H1 (cell line): ENCODE measurements at regions of chr1 and their contacts with region 1.

Region 1: GRCh38 chr1:9145021-9145668 is 16.2 kb upstream of the GPR157 start:
- DNase-seq: no peak
- H3K4me3 ChIP-seq: no peak overlapping the region
- H3K27ac ChIP-seq: no peak overlapping the region
- H3K4me1 ChIP-seq: no peaks in the 10 kb centered on the region; a peak in 1 of 7 replicates
- H3K27me3 ChIP-seq: no peaks in the 10 kb centered on the region
- CTCF ChIP-seq: no peak
- EP300 ChIP-seq: no peak
- POLR2A ChIP-seq: no peak
- RAD21 ChIP-seq: no peak

Region 2: GRCh38 chr1:9128520-9129265 is 16.5 kb before region 1 on chr1 and contains the start of gene GPR157:
- CTCF ChIA-PET with region 1: interaction called, 29 read pairs
- POLR2A ChIA-PET with region 1: interaction called, 5 read pairs
- DNase-seq: peak; percentile 33 to 89
- H3K4me3 ChIP-seq: peak within 1 kb of the TSS; percentile 42 to 72 (median 60)
- H3K27ac ChIP-seq: no peak within 1 kb of the TSS
- H3K4me1 ChIP-seq: peaks cover 0 to 9% (median 7%) of the 10 kb centered on the region in 4 experiments; a peak in 5 of 7 replicates
- H3K27me3 ChIP-seq: peaks cover 0 to 14% (median 11%) of the 10 kb centered on the region in 4 experiments; a peak in 5 of 7 replicates
- CTCF ChIP-seq: no peak
- EP300 ChIP-seq: no peak
- POLR2A ChIP-seq: peak in 1 of 2 experiments; percentile 41; a peak in 1 of 3 replicates
- RAD21 ChIP-seq: no peak
- total RNA-seq, gene GPR157: 9.8 and 11.0 TPM in 2 replicates

Region 3: GRCh38 chr1:9166289-9167235 is 21.4 kb after region 1 on chr1:
- CTCF ChIA-PET with region 1: interaction called, 13 read pairs
- POLR2A ChIA-PET with region 1: interaction called, 3 read pairs
- DNase-seq: no peak
- H3K4me3 ChIP-seq: 0 out of 8 replicates have a peak overlapping the region, but pooled peaks of 1 of the 4 experiments have one; percentile 5
- H3K27ac ChIP-seq: no peak overlapping the region
- H3K4me1 ChIP-seq: peaks cover 0 to 26% (median 7%) of the 10 kb centered on the region in 4 experiments; a peak in 6 of 7 replicates
- H3K27me3 ChIP-seq: no peaks in the 10 kb centered on the region
- CTCF ChIP-seq: no peak
- EP300 ChIP-seq: no peak
- POLR2A ChIP-seq: no peak
- RAD21 ChIP-seq: no peak

Region 4: DNA sequence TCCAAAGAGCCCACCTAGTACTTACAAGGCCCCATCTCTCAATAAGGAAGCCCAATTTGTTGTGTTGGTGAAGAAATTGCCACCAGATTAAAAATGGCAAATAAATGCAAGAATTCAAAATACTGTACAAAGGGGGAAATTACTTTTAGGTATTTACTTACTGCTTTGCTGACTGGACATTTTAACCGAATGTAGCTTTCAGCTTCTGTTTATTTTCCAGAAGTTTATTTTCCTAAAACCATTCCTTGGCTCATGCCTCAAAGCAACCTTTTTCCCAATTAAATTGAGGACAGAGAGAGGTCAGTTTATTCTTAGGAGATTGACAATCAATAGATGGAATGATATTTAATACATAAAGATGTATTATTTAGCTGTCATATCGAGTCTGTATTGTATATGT is 41.9 kb after region 1 on chr1:
- CTCF ChIA-PET with region 1: interaction called, 16 read pairs
- POLR2A ChIA-PET with region 1: interaction called, 4 read pairs
- DNase-seq: no peak
- H3K4me3 ChIP-seq: no peak overlapping the region
- H3K27ac ChIP-seq: no peak overlapping the region
- H3K4me1 ChIP-seq: peaks cover 0 to 8% (median 6%) of the 10 kb centered on the region in 4 experiments; a peak in 4 of 7 replicates
- H3K27me3 ChIP-seq: peaks cover 0 to 17% (median 9%) of the 10 kb centered on the region in 4 experiments; a peak in 5 of 7 replicates
- CTCF ChIP-seq: no peak
- EP300 ChIP-seq: no peak
- POLR2A ChIP-seq: no peak
- RAD21 ChIP-seq: no peak

Region 5: DNA sequence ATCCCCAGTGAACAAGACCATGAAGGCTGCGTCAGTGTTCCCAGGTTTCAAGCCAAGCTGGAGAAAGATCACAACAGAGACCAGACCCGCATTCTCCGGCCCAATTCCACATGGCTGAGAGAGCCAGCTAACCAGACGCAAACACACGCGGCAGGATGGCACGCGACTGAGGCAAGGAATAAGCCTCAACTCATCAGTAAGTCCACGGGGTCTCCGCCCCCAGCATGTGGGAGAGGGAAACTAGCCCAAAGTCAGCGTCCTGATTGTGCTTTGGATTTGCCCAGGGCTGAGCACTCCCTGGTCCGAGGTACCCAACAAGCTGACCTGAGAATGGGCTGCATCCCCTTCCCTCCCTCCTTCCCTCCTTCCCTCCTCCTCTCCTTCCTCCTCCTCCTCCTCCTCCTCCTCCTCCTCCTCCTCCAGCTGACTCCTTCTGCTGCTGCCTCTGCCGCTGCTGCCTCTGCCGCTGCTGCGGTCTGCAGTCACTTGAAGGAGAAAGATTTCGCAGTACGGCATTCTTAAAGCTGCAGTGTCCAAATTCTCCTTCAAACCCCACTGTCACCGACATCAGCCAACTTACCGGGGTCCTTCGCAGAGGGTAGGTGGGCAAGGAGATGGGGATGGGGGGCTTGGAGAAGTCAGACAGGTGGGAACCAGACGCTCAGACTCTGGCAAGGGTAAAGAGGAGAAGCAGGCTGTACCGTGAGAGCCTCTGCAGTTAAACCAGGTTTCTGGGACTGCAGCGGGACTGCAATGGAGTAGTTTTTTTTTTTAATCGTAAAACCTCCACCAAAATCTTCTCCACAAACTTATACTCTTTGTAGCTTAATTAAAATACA is 56.5 kb after region 1 on chr1:
- CTCF ChIA-PET with region 1: interaction called, 39 read pairs
- POLR2A ChIA-PET with region 1: interaction called, 3 read pairs
- DNase-seq: no peak
- H3K4me3 ChIP-seq: peak overlapping the region; percentile 28 to 64 (median 46); a peak in 7 of 8 replicates
- H3K27ac ChIP-seq: no peak overlapping the region
- H3K4me1 ChIP-seq: peaks cover 0 to 19% (median 7%) of the 10 kb centered on the region in 4 experiments; a peak in 6 of 7 replicates
- H3K27me3 ChIP-seq: peaks cover 44 to 80% (median 69%) of the 10 kb centered on the region in 4 experiments
- CTCF ChIP-seq: no peak
- EP300 ChIP-seq: no peak
- POLR2A ChIP-seq: no peak
- RAD21 ChIP-seq: no peak